ENCODE measurements at regions of chr10 and their contacts with region 1.

Region 1: DNA sequence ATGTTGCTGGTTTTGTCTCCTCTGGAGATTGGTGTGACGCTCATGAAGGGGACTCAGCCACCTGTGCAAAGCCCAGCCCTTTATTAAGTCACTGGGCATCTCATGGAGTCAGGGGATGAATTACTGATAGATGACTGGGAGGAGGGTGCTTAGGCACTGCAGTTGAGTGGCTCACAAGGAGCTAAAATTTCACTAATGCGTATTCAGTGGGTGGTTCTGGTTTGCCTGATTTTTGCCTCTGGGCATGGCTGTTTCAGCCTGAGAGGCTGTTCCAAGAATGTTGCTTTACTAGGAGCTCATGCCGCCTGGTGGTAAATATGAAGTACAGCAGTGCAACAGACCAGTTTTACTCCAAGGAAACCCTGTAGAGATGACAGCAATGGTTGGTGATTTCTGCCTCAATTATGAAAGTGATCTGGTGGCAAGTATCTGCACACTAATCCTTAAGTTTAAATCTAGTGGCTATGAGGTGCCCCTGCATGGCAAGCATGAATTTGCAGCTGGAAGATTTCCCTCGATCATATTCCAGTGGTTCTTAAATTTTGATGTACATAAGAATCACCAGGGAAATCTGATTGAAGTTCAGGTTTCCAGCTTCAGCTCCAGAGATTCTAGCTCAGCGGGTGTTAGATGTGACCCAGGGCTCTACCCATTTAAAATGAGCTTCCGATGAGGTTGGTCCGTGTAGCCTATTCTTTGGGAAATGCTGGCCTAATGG is 19.9 kb downstream of the ACTA2 start:
- DNase-seq: peak; percentile 62
- H3K4me3 ChIP-seq: no peak overlapping the region
- H3K27ac ChIP-seq: peak overlapping the region; percentile 49
- H3K27me3 ChIP-seq: no peaks in the 10 kb centered on the region
- CTCF ChIP-seq: peak; percentile 95

Region 2: DNA sequence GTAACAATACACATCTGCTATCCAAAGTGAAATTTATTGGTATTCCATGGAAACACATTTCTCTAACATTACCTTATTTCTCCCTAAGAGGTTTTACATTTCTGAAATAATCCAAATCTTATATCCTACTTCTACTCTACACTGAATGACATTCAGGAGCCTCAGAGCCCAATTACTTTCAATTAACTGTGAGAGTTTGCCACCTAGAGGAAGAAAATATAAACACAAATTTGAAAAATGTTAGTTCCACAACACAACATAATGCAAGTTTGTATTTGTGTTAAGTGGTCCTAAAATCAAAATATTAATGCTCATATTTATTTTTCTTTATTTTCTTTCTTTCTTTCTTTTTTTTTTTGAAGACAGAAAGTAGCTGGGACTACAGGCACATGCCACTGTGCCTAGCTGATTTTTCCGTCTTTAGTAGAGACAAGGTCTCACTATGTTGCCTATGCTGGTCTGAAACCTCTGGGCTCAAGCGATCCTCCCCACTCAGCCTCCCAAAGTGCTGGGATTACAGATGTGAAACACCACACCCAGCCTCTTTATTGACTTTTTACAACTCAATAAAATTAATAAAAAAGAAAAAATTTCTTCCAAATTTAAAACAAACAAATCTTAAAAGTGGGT is 1160.7 kb before region 1 on chr10:
- CTCF ChIA-PET with region 1: no interaction called
- POLR2A ChIA-PET with region 1: no interaction called
- DNase-seq: no peak
- H3K4me3 ChIP-seq: no peak overlapping the region
- H3K27ac ChIP-seq: no peak overlapping the region
- H3K27me3 ChIP-seq: no peaks in the 10 kb centered on the region
- CTCF ChIP-seq: peak; percentile 40

Region 3: GRCh38 chr10:88687853-88688467 is 244.7 kb before region 1 on chr10:
- CTCF ChIA-PET with region 1: interaction called, 17 read pairs
- POLR2A ChIA-PET with region 1: no interaction called
- DNase-seq: no peak
- H3K4me3 ChIP-seq: no peak overlapping the region
- H3K27ac ChIP-seq: no peak overlapping the region
- H3K27me3 ChIP-seq: no peaks in the 10 kb centered on the region
- CTCF ChIP-seq: peak; percentile 85

Region 4: DNA sequence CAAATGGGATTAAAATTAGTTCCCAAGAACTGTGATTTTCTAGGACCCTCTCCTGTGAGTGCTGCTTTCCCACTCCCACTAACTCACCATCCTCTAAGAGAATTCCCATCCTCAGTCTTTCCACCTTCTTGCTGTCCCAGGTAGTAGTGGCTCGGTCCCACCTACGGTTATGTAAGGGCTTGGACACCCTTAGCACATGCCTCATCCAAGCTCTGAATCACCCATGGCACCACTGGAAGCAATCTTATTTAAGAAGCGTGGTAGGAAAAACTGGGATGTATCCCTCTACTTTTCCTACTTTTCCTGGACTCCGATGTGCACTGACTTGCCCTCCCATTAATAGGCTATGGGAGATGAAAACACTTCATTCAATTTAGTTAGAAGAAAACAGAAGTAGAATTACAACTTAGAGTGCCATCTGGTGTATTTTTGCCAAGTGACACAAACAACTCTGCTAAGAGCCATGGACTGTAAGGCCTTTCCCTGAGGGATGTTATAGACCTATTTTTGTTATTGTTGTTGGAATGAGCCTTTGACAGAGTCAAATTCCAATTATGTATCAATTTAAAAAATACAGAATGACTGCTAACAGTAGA is 67.3 kb before region 1 on chr10:
- CTCF ChIA-PET with region 1: interaction called, 10 read pairs
- POLR2A ChIA-PET with region 1: no interaction called
- DNase-seq: no peak
- H3K4me3 ChIP-seq: no peak overlapping the region
- H3K27ac ChIP-seq: no peak overlapping the region
- H3K27me3 ChIP-seq: no peaks in the 10 kb centered on the region
- CTCF ChIP-seq: peak; percentile 26; the same call in 1 of the 2 replicates

Region 5: DNA sequence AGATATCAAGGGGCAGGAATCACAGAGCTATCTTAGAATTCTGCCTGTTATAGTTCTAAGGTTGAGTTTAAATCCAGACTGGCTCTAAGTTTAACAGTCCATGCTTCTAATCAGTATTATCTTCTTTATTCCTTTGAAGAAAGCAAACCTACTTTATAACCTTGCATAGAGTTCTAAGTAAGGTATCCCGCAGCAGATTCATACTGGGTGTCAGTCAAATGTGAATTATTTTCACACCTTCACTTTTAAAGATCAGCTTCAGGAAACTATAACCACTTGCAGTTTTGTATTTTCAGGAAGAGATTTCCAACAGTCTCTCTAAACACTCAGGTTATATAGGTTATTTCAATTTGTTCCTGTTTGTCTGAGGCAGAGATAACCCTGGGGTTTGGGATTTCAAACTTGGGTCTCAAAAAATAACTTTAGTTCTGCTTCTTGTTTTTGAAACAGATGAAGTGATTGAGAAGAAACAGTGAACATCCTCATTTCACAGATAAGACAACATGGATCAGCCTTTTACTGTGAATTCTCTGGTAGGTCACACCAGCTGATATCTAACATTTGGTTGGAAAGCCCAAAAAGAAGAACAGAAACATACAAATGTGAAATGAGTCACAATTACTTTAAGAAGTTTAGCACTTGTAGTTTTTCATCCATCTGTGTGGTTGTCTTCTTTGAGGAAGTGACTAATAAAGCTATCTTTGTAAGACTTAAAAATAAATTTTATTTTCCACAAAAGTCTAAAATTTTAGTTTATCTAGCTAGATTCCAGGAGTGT is 31.3 kb before region 1 on chr10:
- CTCF ChIA-PET with region 1: interaction called, 18 read pairs
- POLR2A ChIA-PET with region 1: no interaction called
- DNase-seq: no peak
- H3K4me3 ChIP-seq: no peak overlapping the region
- H3K27ac ChIP-seq: no peak overlapping the region
- H3K27me3 ChIP-seq: no peaks in the 10 kb centered on the region
- CTCF ChIP-seq: no peak

Region 6: GRCh38 chr10:88944813-88945212 is 12.1 kb after region 1 on chr10:
- CTCF ChIA-PET with region 1: interaction called, 10 read pairs
- POLR2A ChIA-PET with region 1: no interaction called
- DNase-seq: no peak
- H3K4me3 ChIP-seq: no peak overlapping the region
- H3K27ac ChIP-seq: no peak overlapping the region
- H3K27me3 ChIP-seq: no peaks in the 10 kb centered on the region
- CTCF ChIP-seq: no peak

Region 7: GRCh38 chr10:89217057-89217990 is 284.6 kb after region 1 on chr10:
- CTCF ChIA-PET with region 1: interaction called, 61 read pairs
- POLR2A ChIA-PET with region 1: no interaction called
- DNase-seq: peak; percentile 38
- H3K4me3 ChIP-seq: no peak overlapping the region
- H3K27ac ChIP-seq: no peak overlapping the region
- H3K27me3 ChIP-seq: no peaks in the 10 kb centered on the region
- CTCF ChIP-seq: peak; percentile 67